Activated CD8-positive, alpha-beta memory T cell treated with anti-CD3 and anti-CD28 coated beads, Interleukin-2, amount 10 ng/mL, durations not matched to agents 7 days and 5 days (primary cell): ENCODE measurements at regions of chr19 and their contacts with region 1.

Region 1: GRCh38 chr19:44764975-44765948 is 12.4 kb upstream of the CBLC start:
- DNase-seq: no peak
- ATAC-seq: no peak
- H3K4me3 Mint-ChIP-seq: no peak overlapping the region
- H3K27ac Mint-ChIP-seq: no peak overlapping the region
- H3K4me1 Mint-ChIP-seq: peaks cover 55% of the 10 kb centered on the region
- H3K27me3 Mint-ChIP-seq: peaks cover 4% of the 10 kb centered on the region

Region 2: DNA sequence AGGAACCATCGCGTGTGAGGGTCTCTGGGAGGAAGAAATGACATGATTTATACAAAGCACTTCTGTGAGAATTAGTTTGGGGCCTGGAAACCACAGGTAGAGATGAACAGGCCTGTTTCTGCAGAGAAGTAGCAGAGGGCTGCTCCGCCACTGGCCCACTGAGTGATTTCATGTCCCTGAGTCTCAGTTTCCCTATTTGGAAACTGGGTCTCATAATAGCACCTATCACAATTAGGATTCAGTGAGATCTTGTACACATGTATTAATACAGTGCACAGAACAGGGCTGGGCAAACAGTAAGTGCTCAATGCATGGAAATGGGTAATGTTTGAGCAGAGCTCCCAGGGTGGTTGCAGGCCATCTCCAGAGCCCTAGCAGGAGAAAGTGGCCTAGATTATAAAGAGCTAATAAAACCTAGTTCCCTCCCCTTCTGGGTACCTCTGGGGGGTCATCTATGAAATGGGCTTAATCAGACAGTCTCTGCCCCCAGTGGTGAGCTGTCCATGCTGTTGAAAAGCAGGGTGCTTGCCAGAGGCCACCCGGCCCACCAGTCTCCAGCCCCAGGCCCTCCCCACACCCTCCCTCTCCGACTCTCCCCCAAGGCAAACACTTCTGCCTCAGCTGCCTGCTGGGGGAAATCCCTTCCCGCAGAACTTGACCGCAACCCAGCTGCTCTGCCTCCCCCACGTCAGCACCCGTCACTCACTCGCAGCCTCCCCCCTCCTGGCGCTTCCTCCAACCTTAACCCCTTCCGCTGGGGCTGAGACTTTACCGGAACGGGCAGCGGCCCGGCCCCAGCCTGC is 12.2 kb before region 1 on chr19:
- CTCF ChIA-PET with region 1: interaction called, 41 read pairs
- DNase-seq: peak; percentile 99
- ATAC-seq: peak; percentile 79
- H3K4me3 Mint-ChIP-seq: peak overlapping the region; percentile 88
- H3K27ac Mint-ChIP-seq: peak overlapping the region; percentile 94
- H3K4me1 Mint-ChIP-seq: peaks cover 67% of the 10 kb centered on the region
- H3K27me3 Mint-ChIP-seq: no peaks in the 10 kb centered on the region

Region 3: DNA sequence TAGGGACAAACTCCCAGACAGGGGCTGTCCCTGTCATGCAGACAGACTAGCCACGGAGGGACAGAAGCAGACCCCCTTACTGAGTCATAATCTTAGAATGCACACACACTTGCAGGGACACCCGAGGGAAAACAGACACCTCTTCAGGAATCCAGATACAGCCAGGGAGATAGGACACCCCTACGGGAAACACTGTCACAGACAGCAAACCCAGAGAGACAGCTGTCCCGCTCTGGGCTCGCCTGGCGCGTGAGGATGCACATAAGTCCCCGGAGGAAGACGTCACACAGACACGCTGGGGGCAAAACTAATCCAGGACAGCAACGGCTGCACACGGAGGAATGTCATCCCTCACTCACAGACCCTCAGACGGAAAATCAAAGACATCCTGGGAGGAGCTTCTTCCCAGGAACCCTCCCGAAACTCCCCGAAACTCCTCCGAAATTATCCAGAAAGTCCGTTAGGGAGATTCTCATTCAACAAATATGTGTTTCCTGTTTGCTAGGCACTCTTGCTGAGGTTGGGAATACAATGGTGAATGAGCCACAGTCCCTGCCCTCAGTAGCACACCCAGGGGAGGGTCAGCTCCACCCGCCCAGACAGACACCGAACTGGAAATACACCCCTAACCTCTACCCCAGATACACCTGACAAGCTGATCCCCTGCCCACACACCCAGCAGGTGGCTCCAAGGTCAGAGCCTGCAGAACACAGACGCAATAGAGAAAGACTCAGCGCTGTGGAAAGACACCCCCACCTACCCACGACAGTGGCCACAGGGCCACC is 110.6 kb after region 1 on chr19:
- CTCF ChIA-PET with region 1: no interaction called
- DNase-seq: no peak
- ATAC-seq: no peak
- H3K4me3 Mint-ChIP-seq: no peak overlapping the region
- H3K27ac Mint-ChIP-seq: no peak overlapping the region
- H3K4me1 Mint-ChIP-seq: peaks cover 3% of the 10 kb centered on the region
- H3K27me3 Mint-ChIP-seq: no peaks in the 10 kb centered on the region